Activated CD4-positive, alpha-beta T cell treated with anti-CD3 and anti-CD28 coated beads, Interleukin-2, amount 10 ng/mL, durations not matched to agents 24 days and 14 days (primary cell): ENCODE measurements at regions of chr9 and their contacts with region 1.

Region 1: DNA sequence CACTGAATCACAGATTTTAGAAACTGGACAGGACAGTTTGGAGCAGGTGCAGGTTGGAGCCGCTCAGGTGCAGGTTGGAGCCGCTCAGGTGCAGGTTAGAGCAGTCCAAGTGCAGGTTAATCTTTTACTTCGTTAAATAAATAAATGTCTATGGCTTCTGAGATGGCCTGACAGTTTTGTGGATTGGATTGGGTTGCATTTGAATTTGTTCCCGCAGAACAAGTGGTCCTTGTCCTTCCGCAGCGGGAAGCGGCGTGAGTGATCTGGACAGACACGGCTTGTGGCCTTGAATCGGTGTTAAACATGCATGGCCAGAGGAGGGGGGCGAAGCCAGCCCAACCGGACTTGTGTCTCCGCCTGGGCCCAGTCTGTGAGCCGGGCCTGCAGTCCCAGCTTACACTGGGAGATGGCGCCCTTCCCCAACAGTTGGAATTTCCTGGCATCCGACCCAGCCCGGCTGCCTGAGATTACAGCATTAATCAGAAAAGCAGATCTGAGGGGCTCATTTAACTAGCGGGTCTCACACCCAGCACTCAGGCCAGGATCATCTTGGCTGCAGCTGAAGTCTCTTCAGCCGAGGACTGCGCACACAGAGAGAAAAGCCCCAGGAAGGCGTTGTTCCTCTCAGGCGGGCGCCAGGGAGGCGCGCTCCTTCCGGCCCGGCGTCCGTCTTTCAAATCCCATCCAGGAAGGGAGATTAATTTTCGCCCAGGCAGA is 1.5 kb upstream of the OLFM1 start:
- DNase-seq: peak; percentile 87
- H3K4me3 Mint-ChIP-seq: peak overlapping the region; percentile 41
- H3K27ac Mint-ChIP-seq: no peak overlapping the region
- H3K4me1 Mint-ChIP-seq: peaks cover 5% of the 10 kb centered on the region
- H3K27me3 Mint-ChIP-seq: peaks cover 35% of the 10 kb centered on the region

Region 2: DNA sequence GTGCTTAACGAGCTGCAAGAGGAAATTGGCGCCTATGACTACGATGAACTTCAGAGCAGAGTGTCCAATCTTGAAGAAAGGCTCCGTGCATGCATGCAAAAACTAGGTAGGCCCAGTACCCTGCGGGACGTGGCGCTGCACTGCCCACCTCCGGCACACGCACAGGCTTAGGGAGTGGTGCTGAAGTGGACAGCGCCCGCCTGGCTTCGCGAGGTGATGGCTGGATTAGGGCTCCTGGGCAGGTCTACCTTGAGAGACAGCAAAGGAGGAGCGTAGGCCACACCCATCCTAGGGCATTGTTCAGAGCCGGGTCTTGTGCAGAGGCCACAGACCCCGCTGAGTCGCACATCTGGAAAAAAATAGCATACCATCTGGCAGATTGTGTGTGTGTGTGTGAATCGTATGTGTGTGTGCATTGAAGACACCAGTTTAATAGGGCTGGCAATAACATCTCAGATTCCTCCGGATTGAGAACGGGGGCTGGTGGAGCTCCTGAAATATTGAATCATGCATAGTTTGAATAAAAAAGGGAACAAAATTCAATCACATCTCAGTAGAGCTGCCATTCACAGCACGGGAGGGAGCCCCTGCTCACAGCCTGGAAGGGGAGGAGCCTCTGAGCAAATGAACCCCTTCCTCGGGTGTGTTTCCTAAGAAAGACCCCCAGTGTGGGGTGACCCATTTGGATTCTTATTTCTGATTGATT is 12.6 kb after region 1 on chr9:
- intact Hi-C with region 1: no loop called
- DNase-seq: peak; percentile 75
- H3K4me3 Mint-ChIP-seq: no peak overlapping the region
- H3K27ac Mint-ChIP-seq: no peak overlapping the region
- H3K4me1 Mint-ChIP-seq: no peaks in the 10 kb centered on the region
- H3K27me3 Mint-ChIP-seq: peaks cover 2% of the 10 kb centered on the region

Region 3: GRCh38 chr9:135343837-135344522 is 258.0 kb after region 1 on chr9:
- intact Hi-C with region 1: loop called (anchors 1 kb)
- DNase-seq: peak; percentile 87
- H3K4me3 Mint-ChIP-seq: no peak overlapping the region
- H3K27ac Mint-ChIP-seq: no peak overlapping the region
- H3K4me1 Mint-ChIP-seq: no peaks in the 10 kb centered on the region
- H3K27me3 Mint-ChIP-seq: peaks cover under 1% of the 10 kb centered on the region

Region 4: GRCh38 chr9:135410831-135411473 is 325.0 kb after region 1 on chr9:
- intact Hi-C with region 1: loop called (anchors 2 kb)
- DNase-seq: no peak
- H3K4me3 Mint-ChIP-seq: no peak overlapping the region
- H3K27ac Mint-ChIP-seq: no peak overlapping the region
- H3K4me1 Mint-ChIP-seq: no peaks in the 10 kb centered on the region
- H3K27me3 Mint-ChIP-seq: no peaks in the 10 kb centered on the region